Mammary epithelial cell (primary cell): ENCODE measurements at regions of chr1 and their contacts with region 1.

Region 1: DNA sequence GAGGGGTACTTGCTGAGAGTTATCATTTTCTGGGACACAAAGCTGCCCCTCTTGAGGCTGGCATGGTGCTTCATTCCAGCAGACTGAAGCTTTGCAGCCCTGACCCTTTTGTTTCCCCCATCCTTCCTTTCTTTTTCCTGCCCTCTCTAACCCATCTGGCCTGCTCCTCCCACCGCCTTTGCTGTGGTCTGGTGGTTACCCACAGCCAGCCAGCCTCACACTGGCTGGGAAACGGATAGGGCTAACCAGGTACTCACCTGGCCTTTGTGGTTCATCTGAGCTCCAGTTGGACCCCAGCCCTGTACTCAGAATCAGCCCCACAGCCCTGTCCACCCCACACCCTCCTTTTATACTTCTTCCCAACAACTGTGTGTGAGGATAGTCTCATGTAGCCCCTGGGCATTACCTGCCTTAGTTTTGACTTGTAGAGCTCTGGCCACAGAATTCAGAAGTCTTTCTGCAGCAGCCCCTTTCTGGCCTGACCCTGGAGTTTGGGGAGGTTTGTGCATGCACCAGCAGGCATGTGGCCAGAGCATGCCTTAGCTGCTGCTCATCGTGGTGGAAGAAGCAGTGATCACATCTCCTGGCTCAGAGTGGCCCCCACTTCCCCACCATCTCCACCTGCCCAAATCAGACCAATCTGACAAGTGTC is 138.0 kb downstream of the TRABD2B start:
- DNase-seq: peak; percentile 86
- H3K4me3 ChIP-seq: no peak overlapping the region
- H3K27ac ChIP-seq: no peak overlapping the region
- H3K4me1 ChIP-seq: peaks cover 16% of the 10 kb centered on the region
- H3K27me3 ChIP-seq: no peaks in the 10 kb centered on the region
- CTCF ChIP-seq: no peak

Region 2: DNA sequence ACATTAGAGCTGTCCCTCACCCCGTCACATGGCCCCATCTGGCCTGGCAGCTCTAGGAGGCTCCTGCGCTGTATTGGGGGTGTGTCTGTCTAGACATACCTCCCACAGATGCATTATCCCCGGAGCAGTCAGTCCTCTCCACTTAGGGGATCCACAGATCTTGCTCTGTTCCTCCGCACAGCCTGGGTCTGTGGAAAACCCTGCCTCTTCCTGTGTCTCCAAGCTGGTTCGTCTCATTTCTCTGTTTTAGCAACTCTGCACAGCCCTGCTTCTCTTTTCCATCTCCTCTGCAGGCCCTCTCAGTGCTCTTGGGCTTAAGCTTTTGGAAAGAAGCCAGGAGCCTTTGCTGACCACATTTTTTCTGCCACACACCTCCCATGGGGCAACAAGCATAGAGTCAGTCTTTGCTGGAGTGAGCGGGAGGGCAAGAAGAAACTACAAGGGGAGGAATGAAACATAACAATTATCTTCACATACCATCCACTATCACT is 179.9 kb before region 1 on chr1:
- CTCF ChIA-PET with region 1: no interaction called
- dilution Hi-C with region 1: no loop called
- in situ Hi-C with region 1: no loop called
- intact Hi-C with region 1: no loop called
- DNase-seq: no peak
- H3K4me3 ChIP-seq: no peak overlapping the region
- H3K27ac ChIP-seq: no peak overlapping the region
- H3K4me1 ChIP-seq: no peaks in the 10 kb centered on the region
- H3K27me3 ChIP-seq: no peaks in the 10 kb centered on the region
- CTCF ChIP-seq: no peak

Region 3: GRCh38 chr1:47941609-47942239 is 82.5 kb after region 1 on chr1:
- CTCF ChIA-PET with region 1: no interaction called
- dilution Hi-C with region 1: loop called (anchors 5 kb)
- in situ Hi-C with region 1: no loop called
- intact Hi-C with region 1: no loop called
- DNase-seq: peak; percentile 72
- H3K4me3 ChIP-seq: no peak overlapping the region
- H3K27ac ChIP-seq: no peak overlapping the region
- H3K4me1 ChIP-seq: peaks cover 26% of the 10 kb centered on the region
- H3K27me3 ChIP-seq: no peaks in the 10 kb centered on the region
- CTCF ChIP-seq: no peak